ENCODE measurements at regions of chr5 and their contacts with region 1.

Region 1: DNA sequence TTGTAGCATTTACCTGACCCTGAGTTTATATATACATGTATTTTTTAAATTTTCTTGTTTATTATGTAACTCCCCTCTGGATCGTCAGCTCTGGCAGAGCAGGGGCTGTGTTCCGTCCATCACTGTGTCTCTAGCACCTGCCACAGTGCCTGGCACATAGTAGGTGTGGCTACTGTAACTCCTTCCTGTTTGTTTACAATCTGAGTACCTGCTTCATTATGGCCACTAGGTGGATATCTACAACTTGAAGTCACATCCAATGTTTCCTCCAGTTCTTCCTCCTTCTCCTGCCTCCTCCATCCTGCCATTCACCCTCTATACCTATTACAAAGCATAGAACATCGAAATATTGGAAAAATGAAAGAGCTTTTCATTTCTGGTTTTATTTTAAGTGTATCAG is 14.2 kb upstream of the PPP1R2B start:
- DNase-seq: no peak
- H3K4me3 Mint-ChIP-seq: no peak overlapping the region
- H3K27ac Mint-ChIP-seq: no peak overlapping the region
- H3K4me1 Mint-ChIP-seq: peaks cover 34% of the 10 kb centered on the region
- H3K27me3 Mint-ChIP-seq: no peaks in the 10 kb centered on the region

Region 2: DNA sequence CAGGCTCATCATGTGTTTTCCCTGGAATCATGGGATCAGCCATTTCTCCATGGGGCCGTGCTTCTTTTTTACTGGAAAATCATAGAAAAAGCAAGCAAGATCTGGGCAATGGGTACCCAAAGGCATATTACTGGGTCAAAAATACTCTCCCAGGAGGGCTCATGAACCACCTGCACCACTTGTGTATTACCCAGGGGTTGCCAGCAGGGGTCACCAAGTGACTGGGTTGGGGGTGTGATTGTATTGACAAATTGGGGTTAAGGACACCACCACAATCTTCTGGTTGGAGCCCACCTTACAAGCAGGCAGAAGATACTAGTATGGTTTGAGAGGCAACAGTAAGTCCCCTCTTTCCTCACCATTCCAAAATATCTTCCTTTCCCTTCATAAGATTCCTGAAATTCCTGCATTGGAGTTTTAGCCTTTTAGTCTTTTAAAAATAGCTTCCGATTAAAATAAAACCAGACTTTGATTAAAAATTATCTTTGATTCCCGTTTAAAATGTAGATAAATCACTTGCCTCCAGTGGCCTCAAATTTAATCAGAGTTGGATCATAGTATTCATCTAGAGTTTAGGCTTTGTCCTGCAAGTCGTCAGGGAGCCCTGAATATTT is 1219.0 kb before region 1 on chr5:
- intact Hi-C with region 1: loop called (anchors 5 kb)
- DNase-seq: peak; percentile 34
- H3K4me3 Mint-ChIP-seq: no peak overlapping the region
- H3K27ac Mint-ChIP-seq: no peak overlapping the region
- H3K4me1 Mint-ChIP-seq: no peaks in the 10 kb centered on the region
- H3K27me3 Mint-ChIP-seq: peaks cover 7% of the 10 kb centered on the region

Region 3: GRCh38 chr5:156870498-156870839 is 34.6 kb after region 1 on chr5:
- intact Hi-C with region 1: loop called (anchors 5 kb)
- DNase-seq: no peak
- H3K4me3 Mint-ChIP-seq: peak overlapping the region; percentile 8
- H3K27ac Mint-ChIP-seq: peak overlapping the region; percentile 78
- H3K4me1 Mint-ChIP-seq: peaks cover 44% of the 10 kb centered on the region
- H3K27me3 Mint-ChIP-seq: no peaks in the 10 kb centered on the region

Measured in activated T-helper 1 cell treated with anti-CD3 and anti-CD28 coated beads, Interleukin-12 subunit alpha, Interleukin-12 subunit beta, Interleukin-2, Interleukin-4 antibody, amounts not matched to agents 30 ng/mL and 10 ng/mL and 1 ng/mL, durations not matched to agents 14 hours and 24 hours and 36 hours (primary cell).